MCF 10A (cell line): ENCODE measurements at regions of chr5 and their contacts with region 1.

Region 1: DNA sequence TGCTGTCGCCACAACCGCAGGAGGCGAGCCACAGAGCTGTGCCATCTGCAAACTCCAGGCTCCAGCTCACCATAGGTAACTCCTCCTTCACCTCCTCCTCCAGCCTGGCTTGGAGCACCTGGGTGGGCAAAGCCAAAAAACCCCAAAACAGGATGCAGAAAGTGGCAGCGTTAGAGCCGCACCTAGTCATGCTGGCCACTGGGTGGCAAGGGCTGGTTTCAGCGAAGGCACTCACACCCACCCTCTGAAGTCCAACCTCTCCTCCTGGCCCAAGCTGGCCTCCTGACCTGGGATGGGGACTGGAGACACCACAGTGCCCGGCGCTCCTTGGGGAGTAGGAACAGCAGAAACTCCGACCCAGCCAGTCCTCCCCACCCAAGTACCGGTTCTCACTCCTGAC is 28.7 kb upstream of the ZNF354B start:
- DNase-seq: no peak
- H3K4me3 Mint-ChIP-seq: no peak overlapping the region
- H3K27ac Mint-ChIP-seq: no peak overlapping the region
- H3K4me1 Mint-ChIP-seq: peaks cover 17% of the 10 kb centered on the region
- H3K27me3 Mint-ChIP-seq: no peaks in the 10 kb centered on the region
- CTCF ChIP-seq: no peak

Region 2: GRCh38 chr5:178793151-178793550 is 37.9 kb before region 1 on chr5:
- CTCF ChIA-PET with region 1: interaction called, 16 read pairs
- POLR2A ChIA-PET with region 1: interaction called, 116 read pairs
- intact Hi-C with region 1: loop called (anchors 5 kb)
- DNase-seq: peak; percentile 60
- H3K4me3 Mint-ChIP-seq: no peak overlapping the region
- H3K27ac Mint-ChIP-seq: no peak overlapping the region
- H3K4me1 Mint-ChIP-seq: peaks cover 24% of the 10 kb centered on the region
- H3K27me3 Mint-ChIP-seq: no peaks in the 10 kb centered on the region
- CTCF ChIP-seq: peak; percentile 64

Region 3: DNA sequence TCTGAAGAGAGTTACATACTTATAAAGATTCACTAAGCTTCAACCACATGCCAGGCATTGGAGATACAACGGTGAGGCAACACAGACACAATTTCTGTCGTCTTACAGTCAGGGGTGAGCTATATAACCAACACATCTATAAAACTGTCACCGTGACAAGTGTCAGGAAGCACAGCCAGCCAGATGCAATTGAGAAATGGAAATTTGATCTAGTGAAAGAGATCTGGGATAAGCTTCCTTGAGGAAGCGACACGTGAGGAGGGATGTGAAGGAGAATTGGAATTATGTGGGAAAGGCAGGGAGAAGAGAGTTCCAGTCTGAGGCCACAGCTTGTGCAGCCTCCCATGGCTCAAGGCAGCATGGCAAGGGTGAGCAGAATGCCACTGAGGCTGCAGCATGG is 22.2 kb before region 1 on chr5:
- CTCF ChIA-PET with region 1: no interaction called
- POLR2A ChIA-PET with region 1: interaction called, 10 read pairs
- intact Hi-C with region 1: no loop called
- DNase-seq: no peak
- H3K4me3 Mint-ChIP-seq: no peak overlapping the region
- H3K27ac Mint-ChIP-seq: no peak overlapping the region
- H3K4me1 Mint-ChIP-seq: no peaks in the 10 kb centered on the region
- H3K27me3 Mint-ChIP-seq: no peaks in the 10 kb centered on the region
- CTCF ChIP-seq: no peak